MCF 10A (cell line): ENCODE measurements at regions of chr4 and their contacts with region 1.

Region 1: GRCh38 chr4:132642016-132642817 is 506.9 kb upstream of the PCDH10 start:
- DNase-seq: peak; percentile 66
- H3K4me3 Mint-ChIP-seq: no peak overlapping the region
- H3K27ac Mint-ChIP-seq: no peak overlapping the region
- H3K4me1 Mint-ChIP-seq: no peaks in the 10 kb centered on the region
- H3K27me3 Mint-ChIP-seq: no peaks in the 10 kb centered on the region
- CTCF ChIP-seq: peak; percentile 85

Region 2: DNA sequence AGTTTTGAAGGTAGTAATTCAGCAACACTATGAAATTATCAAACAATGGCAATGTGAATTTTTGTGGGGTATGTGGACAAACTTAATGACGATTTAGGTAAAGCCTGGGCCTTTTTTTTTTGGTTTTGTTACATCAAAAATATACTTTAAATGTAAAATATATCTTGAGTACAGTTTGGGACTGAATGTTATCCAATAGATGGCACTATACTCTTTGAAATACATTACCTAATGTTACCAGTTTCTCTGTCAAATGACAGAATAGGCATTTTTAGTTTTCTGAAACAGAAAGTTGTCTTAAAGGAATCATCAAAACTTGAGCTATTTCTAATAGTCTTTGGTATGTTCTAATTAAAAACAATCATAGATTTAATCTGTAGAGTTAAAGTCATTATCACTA is 1894.4 kb before region 1 on chr4:
- CTCF ChIA-PET with region 1: no interaction called
- POLR2A ChIA-PET with region 1: no interaction called
- intact Hi-C with region 1: loop called (anchors 2 kb)
- DNase-seq: peak; percentile 17
- H3K4me3 Mint-ChIP-seq: no peak overlapping the region
- H3K27ac Mint-ChIP-seq: no peak overlapping the region
- H3K4me1 Mint-ChIP-seq: no peaks in the 10 kb centered on the region
- H3K27me3 Mint-ChIP-seq: no peaks in the 10 kb centered on the region
- CTCF ChIP-seq: peak; percentile 36

Region 3: DNA sequence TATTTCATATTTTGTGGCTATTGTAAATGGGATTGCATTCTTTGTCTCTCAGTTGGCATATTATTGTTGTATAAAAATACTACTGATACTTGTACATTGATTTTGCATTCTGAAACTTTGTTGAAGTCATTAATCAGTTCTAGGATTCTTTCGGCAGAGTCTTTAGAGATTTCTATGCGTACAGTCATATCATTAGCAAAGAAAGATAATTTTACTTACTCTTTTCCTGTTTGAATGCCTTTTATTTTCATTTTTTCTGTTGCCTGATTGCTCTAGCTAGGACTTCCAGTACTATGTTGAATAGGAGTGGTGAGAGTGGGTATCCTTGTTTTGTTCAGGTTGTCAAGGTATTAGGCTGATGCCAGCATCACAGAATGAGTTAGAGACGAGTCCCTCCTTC is 215.1 kb before region 1 on chr4:
- CTCF ChIA-PET with region 1: no interaction called
- POLR2A ChIA-PET with region 1: no interaction called
- intact Hi-C with region 1: no loop called
- DNase-seq: no peak
- H3K4me3 Mint-ChIP-seq: no peak overlapping the region
- H3K27ac Mint-ChIP-seq: no peak overlapping the region
- H3K4me1 Mint-ChIP-seq: no peaks in the 10 kb centered on the region
- H3K27me3 Mint-ChIP-seq: no peaks in the 10 kb centered on the region
- CTCF ChIP-seq: no peak

Region 4: DNA sequence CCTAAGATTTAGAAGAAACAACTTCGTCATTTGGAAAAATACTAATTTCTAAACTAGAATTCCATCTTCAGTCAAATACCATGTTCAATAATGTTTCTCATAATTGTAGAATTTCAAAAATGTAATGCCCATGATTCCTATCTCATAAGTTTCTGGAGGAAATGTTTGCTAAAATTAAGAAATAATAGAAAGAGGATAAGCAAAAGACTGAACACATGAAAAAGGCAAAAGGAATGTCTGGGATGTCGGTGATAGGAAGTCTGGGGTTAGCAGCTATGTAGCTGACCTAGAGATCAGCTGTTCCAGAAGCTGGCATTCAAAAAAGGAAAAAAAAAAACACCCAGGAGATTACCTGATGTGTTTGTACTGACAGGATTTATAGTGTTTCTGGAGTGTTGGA is 488.0 kb after region 1 on chr4:
- CTCF ChIA-PET with region 1: no interaction called
- POLR2A ChIA-PET with region 1: no interaction called
- intact Hi-C with region 1: loop called (anchors 10 kb)
- DNase-seq: no peak
- H3K4me3 Mint-ChIP-seq: no peak overlapping the region
- H3K27ac Mint-ChIP-seq: no peak overlapping the region
- H3K4me1 Mint-ChIP-seq: no peaks in the 10 kb centered on the region
- H3K27me3 Mint-ChIP-seq: no peaks in the 10 kb centered on the region
- CTCF ChIP-seq: no peak